ENCODE measurements at regions of chr9 and their contacts with region 1.

Region 1: DNA sequence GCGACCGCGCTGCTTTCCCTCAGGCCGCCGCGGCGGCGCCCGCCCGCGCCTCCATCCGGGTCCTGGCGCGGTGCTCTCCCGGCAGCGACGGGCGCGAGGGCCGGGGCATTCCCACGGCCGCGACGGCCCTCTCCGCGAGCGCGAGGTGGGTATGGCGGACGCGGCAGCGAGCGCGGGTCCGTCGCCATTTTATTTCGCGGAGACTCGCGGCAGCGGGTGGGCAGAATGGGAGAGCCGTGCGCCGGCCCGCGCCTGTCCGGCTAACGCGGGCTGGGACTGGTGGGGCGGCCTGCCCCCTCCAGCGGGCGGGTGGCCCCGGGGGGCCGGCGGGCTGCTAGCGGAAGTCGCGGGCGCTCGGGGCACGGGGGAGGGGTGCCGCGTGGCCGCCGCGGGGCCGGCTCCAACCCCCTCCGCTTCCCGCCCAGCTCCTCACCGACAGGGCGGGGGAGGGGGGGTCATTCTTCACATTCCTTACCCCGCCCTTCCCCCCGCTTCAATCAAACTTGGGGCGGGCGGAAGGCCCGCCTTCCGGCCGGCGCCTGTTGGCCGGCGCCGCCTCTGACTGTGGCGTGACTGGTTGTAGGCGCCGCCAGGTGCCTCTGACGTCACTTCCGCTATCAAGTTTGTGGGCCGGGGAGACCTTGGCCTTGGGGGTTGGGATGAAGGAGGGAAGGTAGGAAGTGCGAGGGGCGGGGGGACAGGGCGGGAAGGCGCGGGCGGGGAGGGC is 82.1 kb downstream of the PTPDC1 start:
- DNase-seq: peak; percentile 91
- H3K4me3 ChIP-seq: peak overlapping the region; percentile 59
- H3K27me3 ChIP-seq: no peaks in the 10 kb centered on the region
- CTCF ChIP-seq: no peak

Region 2: DNA sequence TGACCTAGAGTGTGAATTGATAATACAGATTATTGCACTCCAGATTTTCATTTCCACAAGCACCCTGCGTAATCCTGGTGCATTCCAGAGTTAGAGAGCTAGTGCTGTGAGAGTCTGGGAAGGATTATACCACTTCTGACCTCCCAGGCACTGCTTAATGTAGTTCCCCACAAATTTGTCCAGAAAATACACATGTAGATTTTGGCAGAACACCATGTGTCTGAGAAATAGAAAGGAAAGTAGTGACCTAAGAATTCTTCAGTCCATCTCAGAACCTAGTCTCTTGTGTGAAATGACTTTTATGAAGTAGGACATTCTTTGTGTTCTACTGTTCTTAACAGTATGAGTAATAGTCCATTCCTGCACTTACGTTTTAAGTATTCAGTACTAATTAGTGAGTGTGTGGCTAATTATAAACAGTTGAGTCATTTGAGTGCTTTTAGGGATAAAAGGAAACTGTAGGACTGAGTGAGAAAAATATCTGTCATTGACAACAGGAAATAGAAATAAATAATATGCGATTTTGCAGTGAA is 109.9 kb before region 1 on chr9:
- CTCF ChIA-PET with region 1: no interaction called
- POLR2A ChIA-PET with region 1: interaction called, 11 read pairs
- DNase-seq: peak; percentile 75
- H3K4me3 ChIP-seq: no peak overlapping the region
- H3K27me3 ChIP-seq: no peaks in the 10 kb centered on the region
- CTCF ChIP-seq: no peak

Region 3: DNA sequence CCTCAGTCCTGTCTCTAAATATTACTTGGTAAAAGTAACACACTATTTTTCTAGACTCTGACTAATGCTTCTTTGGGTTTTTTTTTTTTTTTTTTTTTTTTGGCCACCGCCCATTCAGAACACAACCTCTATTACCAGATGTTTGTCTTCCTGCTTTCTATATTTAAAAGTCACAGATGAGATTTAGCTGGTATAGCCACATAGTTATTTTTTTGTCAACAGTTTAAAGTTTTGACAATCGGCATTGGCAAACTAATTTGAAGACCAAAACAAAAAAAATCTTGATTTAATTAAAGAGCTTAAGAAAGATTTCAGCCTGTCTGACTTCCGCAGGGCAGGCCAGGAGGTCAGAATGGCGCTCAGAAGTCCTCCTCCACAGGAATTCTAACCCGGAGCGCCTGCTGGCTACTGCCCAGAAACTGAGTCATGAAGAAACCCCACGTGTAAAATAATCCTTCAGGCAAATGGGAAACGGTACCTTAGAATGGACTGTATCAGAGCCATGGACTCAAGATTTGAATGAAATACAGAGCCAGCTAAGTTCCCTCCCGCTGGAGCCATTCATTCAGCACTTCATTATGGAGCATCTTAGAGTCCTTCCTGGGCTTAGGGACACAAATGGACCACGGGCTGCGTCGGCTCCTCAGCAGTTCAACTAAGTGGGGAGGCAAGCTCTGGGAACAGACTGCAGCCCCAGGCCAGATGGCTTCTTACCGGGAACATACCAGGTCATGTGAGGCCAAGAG is 26.6 kb before region 1 on chr9:
- CTCF ChIA-PET with region 1: interaction called, 3 read pairs
- POLR2A ChIA-PET with region 1: interaction called, 22 read pairs
- DNase-seq: peak; percentile 95
- H3K4me3 ChIP-seq: no peak overlapping the region
- H3K27me3 ChIP-seq: no peaks in the 10 kb centered on the region
- CTCF ChIP-seq: no peak

Region 4: DNA sequence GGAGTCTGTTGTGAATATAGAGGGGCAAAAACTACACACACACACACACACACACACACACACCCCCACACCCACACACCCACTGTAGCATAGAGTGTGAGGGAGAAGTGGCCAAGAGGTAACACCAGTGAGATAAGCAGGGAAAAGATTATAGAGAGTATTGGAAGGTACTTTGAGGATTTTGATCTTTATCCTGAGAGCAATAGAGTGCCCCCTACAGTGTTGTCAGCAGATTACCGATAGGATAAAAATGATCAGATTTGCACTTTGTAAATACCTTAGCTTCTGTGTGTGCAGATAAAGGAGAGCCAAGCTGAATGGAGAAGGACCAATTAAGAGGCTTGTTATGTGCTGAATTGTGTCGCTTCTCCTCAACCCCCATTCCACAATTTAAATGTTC is 1741.4 kb after region 1 on chr9:
- CTCF ChIA-PET with region 1: no interaction called
- POLR2A ChIA-PET with region 1: interaction called, 10 read pairs
- DNase-seq: no peak
- H3K4me3 ChIP-seq: no peak overlapping the region
- H3K27me3 ChIP-seq: no peaks in the 10 kb centered on the region
- CTCF ChIP-seq: no peak

Measured in BJ (cell line).